ENCODE measurements at regions of chr9 and their contacts with region 1.

Region 1: DNA sequence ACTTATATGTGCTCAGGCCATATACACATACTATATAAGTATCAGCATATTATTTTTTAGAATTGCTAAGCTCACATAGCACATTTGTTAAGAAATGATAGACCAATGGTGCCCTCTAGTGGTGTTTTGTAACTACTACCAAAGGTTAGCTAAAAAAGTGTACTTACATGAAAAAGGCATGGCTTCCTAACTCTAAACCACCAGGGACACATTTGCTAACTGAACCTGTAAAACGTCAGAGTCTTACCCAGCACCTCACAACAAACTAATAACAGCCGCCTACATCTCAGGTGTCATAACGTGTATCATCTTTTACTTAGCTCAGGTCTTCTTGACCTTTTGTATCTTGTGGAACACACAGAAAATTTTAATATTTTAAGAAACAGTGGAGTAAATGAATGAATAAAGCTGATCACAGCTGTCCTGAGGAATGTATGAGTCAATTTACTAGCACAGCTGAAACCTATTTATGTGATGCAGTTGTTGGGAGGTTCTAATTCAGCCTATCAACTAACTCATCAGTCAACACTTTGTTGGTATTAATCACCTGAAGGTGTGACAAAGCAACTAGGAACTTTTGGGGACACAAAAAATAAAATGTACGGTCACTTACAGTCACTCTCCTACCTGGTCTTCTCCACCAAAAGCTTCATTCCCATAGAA is 72.9 kb downstream of the BAAT start:
- DNase-seq: peak in 4 of 5 donors; percentile 45 to 52 (median 52)
- H3K4me3 ChIP-seq: no peak overlapping the region
- H3K4me3 Mint-ChIP-seq: no peak overlapping the region
- H3K27ac ChIP-seq: no peak overlapping the region
- H3K27ac Mint-ChIP-seq: no peak overlapping the region
- H3K4me1 ChIP-seq: no peaks in the 10 kb centered on the region
- H3K4me1 Mint-ChIP-seq: no peaks in the 10 kb centered on the region
- H3K27me3 ChIP-seq: no peaks in the 10 kb centered on the region
- H3K27me3 Mint-ChIP-seq: peaks cover 0 to 6% of the 10 kb centered on the region in 2 donors

Region 2: DNA sequence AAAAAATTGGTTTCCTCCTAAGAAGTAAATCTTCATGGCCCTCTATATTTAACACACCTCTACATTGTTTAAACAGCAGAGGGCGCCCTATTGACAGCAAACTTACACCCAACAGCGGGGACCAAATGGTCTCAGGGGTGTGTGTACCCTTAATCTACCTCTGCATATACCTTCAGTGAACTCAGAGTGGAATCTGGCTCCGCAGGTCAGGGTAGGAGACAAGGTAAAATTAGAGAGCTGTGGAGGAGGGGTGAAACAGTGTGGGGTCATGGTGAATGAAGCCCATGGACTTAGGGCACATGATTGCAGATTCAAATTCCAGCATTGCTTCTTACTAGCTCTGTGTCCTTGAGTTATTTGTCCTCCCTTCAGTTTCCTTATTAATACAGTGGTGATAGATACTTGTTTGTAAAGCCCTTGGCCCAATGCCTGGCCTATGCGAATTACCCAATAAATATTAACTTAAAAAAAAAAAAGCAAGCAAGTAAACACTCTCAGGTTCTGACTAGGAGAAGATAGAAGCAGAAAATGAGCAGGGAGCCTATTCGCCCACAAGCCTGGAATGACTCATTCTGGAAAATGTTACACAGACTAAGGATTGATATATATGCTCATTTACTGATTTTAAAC is 611.1 kb before region 1 on chr9:
- CTCF ChIA-PET with region 1: no interaction called
- POLR2A ChIA-PET with region 1: no interaction called
- intact Hi-C with region 1: loop called (anchors 2 kb)
- DNase-seq: peak in 1 of 5 donors; percentile 1
- H3K4me3 ChIP-seq: no peak overlapping the region
- H3K4me3 Mint-ChIP-seq: no peak overlapping the region
- H3K27ac ChIP-seq: no peak overlapping the region
- H3K27ac Mint-ChIP-seq: no peak overlapping the region
- H3K4me1 ChIP-seq: no peaks in the 10 kb centered on the region
- H3K4me1 Mint-ChIP-seq: no peaks in the 10 kb centered on the region
- H3K27me3 ChIP-seq: no peaks in the 10 kb centered on the region
- H3K27me3 Mint-ChIP-seq: no peaks in the 10 kb centered on the region

Region 3: DNA sequence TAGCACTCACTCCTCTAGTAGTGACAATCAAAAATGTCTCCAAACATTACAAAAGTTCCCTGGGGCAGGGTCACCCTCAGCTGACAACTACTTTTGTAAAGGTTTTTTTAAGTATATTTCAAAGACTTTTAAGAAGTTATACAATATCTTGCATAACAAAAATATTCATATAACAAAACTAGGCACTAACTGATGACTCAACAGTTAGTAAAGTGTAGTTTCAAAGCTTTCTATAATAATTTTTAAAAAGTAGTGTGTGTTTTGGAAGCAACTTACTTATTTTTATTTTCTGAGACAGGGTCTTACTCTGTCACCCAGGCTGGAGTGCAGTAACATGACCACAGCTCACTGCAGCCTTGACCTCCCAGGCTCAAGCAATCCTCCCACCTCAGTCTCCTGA is 12.0 kb before region 1 on chr9:
- CTCF ChIA-PET with region 1: interaction called, 26 read pairs
- POLR2A ChIA-PET with region 1: no interaction called
- intact Hi-C with region 1: no loop called
- DNase-seq: no peak
- H3K4me3 ChIP-seq: no peak overlapping the region
- H3K4me3 Mint-ChIP-seq: no peak overlapping the region
- H3K27ac ChIP-seq: no peak overlapping the region
- H3K27ac Mint-ChIP-seq: no peak overlapping the region
- H3K4me1 ChIP-seq: no peaks in the 10 kb centered on the region
- H3K4me1 Mint-ChIP-seq: no peaks in the 10 kb centered on the region
- H3K27me3 ChIP-seq: no peaks in the 10 kb centered on the region
- H3K27me3 Mint-ChIP-seq: peaks cover 0 to 1% of the 10 kb centered on the region in 2 donors

Region 4: DNA sequence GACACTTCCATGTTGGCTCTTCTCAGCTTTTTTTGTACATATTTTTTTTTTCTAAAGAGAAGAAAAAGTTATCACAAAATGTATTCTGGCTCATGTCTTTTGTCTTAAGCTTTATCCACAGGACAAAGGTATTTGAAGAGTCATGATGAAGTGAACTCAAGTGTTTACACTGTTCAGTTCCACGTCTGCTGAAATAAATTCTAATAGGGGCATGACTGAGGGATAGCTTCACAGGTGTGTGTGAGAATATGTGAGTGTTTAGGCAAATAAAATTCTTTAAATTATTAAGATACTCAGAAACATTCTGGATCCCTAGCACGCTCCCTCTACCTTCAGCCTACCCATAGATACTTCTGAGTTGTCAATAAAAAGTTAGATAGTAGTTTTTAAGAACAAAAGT is 13.2 kb after region 1 on chr9:
- CTCF ChIA-PET with region 1: interaction called, 19 read pairs
- POLR2A ChIA-PET with region 1: no interaction called
- intact Hi-C with region 1: no loop called
- DNase-seq: no peak
- H3K4me3 ChIP-seq: no peak overlapping the region
- H3K4me3 Mint-ChIP-seq: no peak overlapping the region
- H3K27ac ChIP-seq: no peak overlapping the region
- H3K27ac Mint-ChIP-seq: no peak overlapping the region
- H3K4me1 ChIP-seq: no peaks in the 10 kb centered on the region
- H3K4me1 Mint-ChIP-seq: no peaks in the 10 kb centered on the region
- H3K27me3 ChIP-seq: no peaks in the 10 kb centered on the region
- H3K27me3 Mint-ChIP-seq: peaks cover 4 to 12% of the 10 kb centered on the region in 2 donors

Measured in CD4-positive, alpha-beta memory T cell (primary cell).